ENCODE measurements at regions of chr1 and their contacts with region 1.

Region 1: GRCh38 chr1:154936555-154937084 is at the start of gene PMVK:
- DNase-seq: peak; percentile 87 to 95
- H3K4me3 ChIP-seq: peak within 1 kb of the TSS; percentile 62
- H3K27ac ChIP-seq: peak within 1 kb of the TSS; percentile 93
- H3K4me1 ChIP-seq: peaks cover 50% of the 10 kb centered on the region
- H3K27me3 ChIP-seq: no peaks in the 10 kb centered on the region
- CTCF ChIP-seq: peak; percentile 42; the same call in 1 of the 2 replicates
- total RNA-seq, gene PMVK: 27.1 and 38.2 TPM in 2 replicates

Region 2: DNA sequence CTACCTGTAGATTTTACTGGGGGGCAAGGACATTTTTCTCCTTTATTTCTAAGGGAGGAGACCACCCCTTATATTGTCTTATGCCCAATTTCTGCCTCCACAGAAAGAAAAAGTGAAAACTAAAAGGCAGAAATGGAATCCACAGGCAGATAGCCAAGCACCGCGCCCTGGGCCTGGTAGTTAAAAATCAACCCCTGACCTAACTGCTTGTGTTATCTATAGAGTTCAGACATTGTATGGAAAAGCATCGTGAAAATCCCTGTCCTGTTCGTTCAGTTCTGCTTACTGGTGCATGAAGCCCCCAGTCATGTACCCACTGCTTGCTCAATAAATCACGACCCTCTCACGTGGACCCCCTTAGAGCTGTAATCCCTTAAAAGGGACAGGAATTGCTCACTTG is 565.2 kb before region 1 on chr1:
- CTCF ChIA-PET with region 1: no interaction called
- POLR2A ChIA-PET with region 1: interaction called, 19 read pairs
- intact Hi-C with region 1: no loop called
- DNase-seq: no peak
- H3K4me3 ChIP-seq: no peak overlapping the region
- H3K27ac ChIP-seq: no peak overlapping the region
- H3K4me1 ChIP-seq: no peaks in the 10 kb centered on the region
- H3K27me3 ChIP-seq: no peaks in the 10 kb centered on the region
- CTCF ChIP-seq: no peak

Region 3: DNA sequence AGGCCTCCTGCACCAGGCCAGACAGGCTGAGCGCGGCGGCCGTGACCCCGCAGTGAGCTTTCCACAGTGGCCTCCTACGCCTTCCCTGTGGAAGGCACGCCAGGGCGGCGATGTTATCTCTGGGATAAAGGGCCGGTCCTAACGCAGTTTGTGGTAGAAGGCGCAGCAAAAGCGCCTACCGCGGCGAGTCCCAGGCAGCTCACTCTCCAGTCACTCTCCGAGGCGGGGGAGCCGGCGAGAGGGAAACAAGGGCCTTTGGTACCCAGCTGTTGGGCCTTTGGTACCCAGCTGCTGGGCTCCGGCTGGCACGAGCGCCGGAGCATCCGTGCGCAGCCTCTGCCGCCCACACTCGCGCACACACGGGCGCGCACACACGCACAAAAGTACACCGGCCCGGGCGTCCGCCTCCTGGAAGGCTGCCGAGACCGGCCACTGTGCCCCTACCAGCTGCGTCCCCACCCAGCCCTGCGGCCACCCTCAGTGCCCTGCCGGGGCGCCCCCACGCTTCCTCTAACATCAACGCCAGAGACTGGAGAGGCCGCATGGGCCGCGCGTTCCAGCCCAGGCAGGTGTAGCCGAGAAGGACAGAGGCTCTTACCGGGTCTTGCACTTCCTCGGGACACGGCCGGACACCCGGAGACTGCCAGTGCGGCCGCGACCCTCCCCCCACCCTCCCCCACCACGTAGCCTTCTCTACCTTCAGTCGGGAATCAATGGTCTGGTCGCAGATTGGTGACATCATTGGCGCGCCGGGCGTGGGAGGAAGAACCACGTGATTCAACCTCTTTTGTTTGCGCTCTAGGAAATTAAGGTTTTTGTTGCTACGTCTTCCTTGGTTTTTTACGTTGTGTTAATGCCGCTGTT is 309.1 kb before region 1 on chr1:
- CTCF ChIA-PET with region 1: no interaction called
- POLR2A ChIA-PET with region 1: no interaction called
- intact Hi-C with region 1: loop called (anchors 5 kb)
- DNase-seq: peak; percentile 74
- H3K4me3 ChIP-seq: peak overlapping the region; percentile 95
- H3K27ac ChIP-seq: peak overlapping the region; percentile 28
- H3K4me1 ChIP-seq: peaks cover 7% of the 10 kb centered on the region
- H3K27me3 ChIP-seq: peaks cover 16% of the 10 kb centered on the region
- CTCF ChIP-seq: no peak

Region 4: GRCh38 chr1:154726443-154726842 is 210.2 kb before region 1 on chr1:
- CTCF ChIA-PET with region 1: no interaction called
- POLR2A ChIA-PET with region 1: no interaction called
- intact Hi-C with region 1: no loop called
- DNase-seq: no peak
- H3K4me3 ChIP-seq: no peak overlapping the region
- H3K27ac ChIP-seq: no peak overlapping the region
- H3K4me1 ChIP-seq: peaks cover 17% of the 10 kb centered on the region
- H3K27me3 ChIP-seq: no peaks in the 10 kb centered on the region
- CTCF ChIP-seq: no peak

Region 5: GRCh38 chr1:154760469-154760933 is 176.1 kb before region 1 on chr1:
- CTCF ChIA-PET with region 1: interaction called, 10 read pairs
- POLR2A ChIA-PET with region 1: no interaction called
- intact Hi-C with region 1: no loop called
- DNase-seq: peak in 1 of 2 experiments; percentile 45
- H3K4me3 ChIP-seq: no peak overlapping the region
- H3K27ac ChIP-seq: no peak overlapping the region
- H3K4me1 ChIP-seq: no peaks in the 10 kb centered on the region
- H3K27me3 ChIP-seq: peaks cover 61% of the 10 kb centered on the region
- CTCF ChIP-seq: peak; percentile 39; the same call in 1 of the 2 replicates

Region 6: DNA sequence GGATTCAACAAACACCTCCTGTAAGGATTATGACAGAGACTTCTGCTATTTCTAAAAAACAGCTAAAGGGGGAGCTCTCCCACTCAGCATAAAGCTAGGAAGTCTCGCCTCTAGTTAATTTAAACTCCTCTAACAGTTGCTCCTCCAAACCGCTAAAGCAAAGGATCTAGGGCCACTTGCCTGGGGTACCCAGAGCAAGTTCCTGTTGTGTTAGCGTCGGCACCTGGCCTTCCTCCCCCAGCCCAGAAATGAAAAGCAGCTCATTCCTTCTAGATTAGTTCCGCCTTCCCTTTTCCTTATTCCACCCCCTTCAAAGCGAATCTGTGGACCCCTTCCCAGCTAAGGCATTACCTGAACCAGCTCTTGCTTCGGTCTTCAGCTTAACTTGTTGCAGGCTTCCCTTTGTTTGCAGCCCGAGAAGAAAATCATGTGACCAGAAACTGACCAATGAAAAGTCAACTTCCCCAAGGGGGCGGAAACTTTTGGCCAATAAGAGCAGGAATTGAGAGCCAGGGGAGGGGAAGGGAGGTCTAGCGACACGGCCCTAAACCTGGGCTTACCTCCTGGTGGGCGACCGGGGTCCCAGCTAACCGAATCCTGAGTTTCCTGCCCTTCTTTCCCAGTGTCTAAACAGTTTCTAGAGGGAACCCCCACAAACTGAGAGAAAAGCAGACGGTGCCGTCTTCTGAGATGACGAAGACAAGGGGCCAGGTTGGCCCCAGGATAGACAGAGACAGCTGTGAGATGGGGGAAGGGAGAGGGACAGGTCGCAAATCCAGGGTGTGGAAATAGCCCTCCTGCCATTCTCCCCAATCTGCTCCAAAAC is 19.3 kb after region 1 on chr1 and contains the start of gene PBXIP1:
- CTCF ChIA-PET with region 1: no interaction called
- POLR2A ChIA-PET with region 1: interaction called, 4 read pairs
- intact Hi-C with region 1: loop called (anchors 1 kb)
- DNase-seq: peak; percentile 82 to 84
- H3K4me3 ChIP-seq: peak within 1 kb of the TSS; percentile 75
- H3K27ac ChIP-seq: 0 out of 2 replicates have a peak within 1 kb of the TSS, but pooled peaks have one; percentile 16
- H3K4me1 ChIP-seq: peaks cover 14% of the 10 kb centered on the region
- H3K27me3 ChIP-seq: no peaks in the 10 kb centered on the region
- CTCF ChIP-seq: peak; percentile 56; the same call in 1 of the 2 replicates
- total RNA-seq, gene PBXIP1: 36.3 and 40.2 TPM in 2 replicates

Region 7: DNA sequence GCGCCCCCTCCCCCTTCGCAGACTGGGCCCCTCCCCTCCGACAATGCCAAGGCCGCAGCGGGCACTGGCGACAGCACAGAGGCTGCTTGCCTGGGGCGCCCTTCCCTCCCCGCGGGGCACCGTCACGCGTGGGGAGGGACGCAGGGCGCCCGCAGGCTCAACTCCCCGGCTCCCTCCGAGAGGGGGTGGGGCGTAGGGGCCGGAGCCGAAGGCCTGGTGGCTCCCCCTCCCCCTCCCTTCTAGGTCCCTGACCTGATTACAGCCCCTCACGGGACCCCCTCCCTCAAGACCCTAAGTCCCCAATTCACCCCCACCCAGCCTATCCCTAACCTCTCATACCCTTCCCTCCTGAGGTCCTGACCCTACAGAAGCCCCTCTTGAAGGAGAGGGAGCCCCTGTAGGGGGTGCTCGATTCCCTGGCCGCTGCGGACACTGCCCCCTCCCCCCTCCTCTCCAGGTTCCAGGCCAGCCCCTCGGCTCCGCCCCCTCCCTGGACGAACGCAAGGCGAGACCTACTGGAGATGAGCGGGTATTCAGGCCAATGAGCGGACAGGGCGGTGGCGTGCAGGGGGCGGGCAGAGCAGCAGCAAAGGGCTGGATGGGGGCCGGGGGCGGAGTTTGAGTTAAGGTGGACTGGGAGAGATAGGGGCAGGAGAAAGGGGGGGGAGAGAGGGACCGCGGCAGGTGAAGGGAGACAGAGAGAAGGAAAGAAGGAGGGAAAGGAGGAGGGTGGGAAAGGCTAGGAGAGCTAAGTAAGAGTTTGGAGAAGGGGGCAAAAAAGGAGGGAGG is 65.2 kb after region 1 on chr1:
- CTCF ChIA-PET with region 1: no interaction called
- POLR2A ChIA-PET with region 1: interaction called, 11 read pairs
- intact Hi-C with region 1: loop called (anchors 2 kb)
- DNase-seq: peak; percentile 96 to 99
- H3K4me3 ChIP-seq: peak overlapping the region; percentile 80
- H3K27ac ChIP-seq: peak overlapping the region; percentile 72
- H3K4me1 ChIP-seq: peaks cover 20% of the 10 kb centered on the region
- H3K27me3 ChIP-seq: no peaks in the 10 kb centered on the region
- CTCF ChIP-seq: peak; percentile 68; the same call in 1 of the 2 replicates

Region 8: GRCh38 chr1:155038602-155039307 is 102.1 kb after region 1 on chr1:
- CTCF ChIA-PET with region 1: no interaction called
- POLR2A ChIA-PET with region 1: interaction called, 25 read pairs
- intact Hi-C with region 1: no loop called
- DNase-seq: peak; percentile 71 to 86
- H3K4me3 ChIP-seq: peak overlapping the region; percentile 11; the same call in 1 of the 2 replicates
- H3K27ac ChIP-seq: peak overlapping the region; percentile 53
- H3K4me1 ChIP-seq: peaks cover 28% of the 10 kb centered on the region
- H3K27me3 ChIP-seq: no peaks in the 10 kb centered on the region
- CTCF ChIP-seq: no peak

Region 9: GRCh38 chr1:155173478-155174323 is 237.1 kb after region 1 on chr1 and contains the start of gene TRIM46:
- CTCF ChIA-PET with region 1: no interaction called
- POLR2A ChIA-PET with region 1: no interaction called
- intact Hi-C with region 1: no loop called
- DNase-seq: peak in 1 of 2 experiments; percentile 51
- H3K4me3 ChIP-seq: peak within 1 kb of the TSS; percentile 89
- H3K27ac ChIP-seq: peak within 1 kb of the TSS; percentile 59
- H3K4me1 ChIP-seq: peaks cover 32% of the 10 kb centered on the region
- H3K27me3 ChIP-seq: no peaks in the 10 kb centered on the region
- CTCF ChIP-seq: peak; percentile 46; the same call in 1 of the 2 replicates
- total RNA-seq, gene TRIM46: 6.0 and 6.2 TPM in 2 replicates

Measured in PC-9 (cell line).